ENCODE measurements at regions of chr2 and their contacts with region 1.

Region 1: DNA sequence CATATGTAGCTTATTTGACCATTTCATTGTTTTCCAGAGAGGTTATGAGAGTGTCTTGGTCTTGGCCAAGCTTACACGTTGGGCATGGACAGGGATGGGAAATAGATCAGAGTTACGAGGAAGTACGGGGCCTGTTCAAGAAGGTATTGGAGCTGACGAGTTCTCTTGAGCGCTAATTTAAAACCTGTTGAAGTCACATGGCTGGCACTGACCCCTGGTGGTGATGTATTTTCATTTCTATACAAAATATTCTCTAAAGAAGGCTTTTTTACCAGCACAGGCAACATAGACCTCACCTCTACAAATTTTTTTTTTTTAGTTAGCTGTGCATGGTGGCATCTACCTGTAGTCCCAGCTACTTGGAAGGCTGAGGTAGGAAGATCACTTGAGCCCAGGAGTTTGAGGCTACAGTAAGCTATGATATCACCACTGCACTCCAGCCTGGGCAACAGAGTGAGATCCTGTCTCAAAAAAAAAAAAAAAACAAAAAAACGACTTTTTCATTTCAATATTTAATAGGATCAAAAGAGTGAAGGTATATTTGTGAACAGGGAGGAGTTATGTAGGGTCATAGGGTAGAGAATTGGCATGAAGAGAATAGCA is 19.6 kb downstream of the UGP2 start:
- DNase-seq: peak; percentile 71
- H3K4me3 Mint-ChIP-seq: no peak overlapping the region
- H3K27ac Mint-ChIP-seq: no peak overlapping the region
- H3K4me1 Mint-ChIP-seq: peaks cover 52% of the 10 kb centered on the region
- H3K27me3 Mint-ChIP-seq: no peaks in the 10 kb centered on the region

Region 2: DNA sequence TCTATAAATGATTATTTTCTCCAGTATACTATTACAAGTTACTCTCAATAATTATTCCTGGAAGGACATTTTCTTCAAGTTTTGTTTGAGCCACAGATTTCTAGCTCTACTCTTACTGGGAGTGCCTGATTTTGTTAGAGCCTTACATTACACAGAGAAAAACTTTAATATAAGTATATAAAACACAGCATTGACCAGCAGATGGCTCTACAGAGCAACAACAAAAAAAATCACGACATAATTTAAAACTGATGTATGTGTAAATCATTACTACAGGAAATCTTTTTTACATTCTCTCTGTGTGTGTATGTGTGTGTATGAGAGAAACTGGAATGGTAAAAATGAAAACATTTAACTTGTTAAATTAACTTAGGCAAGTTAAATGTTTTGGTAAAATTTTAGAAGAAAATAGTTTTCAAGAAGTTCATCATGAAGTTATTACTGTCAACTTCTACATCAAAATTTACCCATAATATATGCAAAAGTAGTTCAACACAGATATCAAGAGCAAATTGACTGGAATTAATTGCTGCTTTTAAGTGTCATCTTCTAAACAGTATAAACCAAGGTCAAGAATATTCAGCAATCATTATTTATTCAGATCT is 169.2 kb before region 1 on chr2:
- CTCF ChIA-PET with region 1: interaction called, 32 read pairs
- DNase-seq: peak; percentile 29
- H3K4me3 Mint-ChIP-seq: no peak overlapping the region
- H3K27ac Mint-ChIP-seq: no peak overlapping the region
- H3K4me1 Mint-ChIP-seq: no peaks in the 10 kb centered on the region
- H3K27me3 Mint-ChIP-seq: no peaks in the 10 kb centered on the region

Region 3: GRCh38 chr2:63841254-63842022 is 19.9 kb before region 1 on chr2 and contains the start of gene UGP2:
- CTCF ChIA-PET with region 1: interaction called, 32 read pairs
- DNase-seq: peak; percentile 94
- H3K4me3 Mint-ChIP-seq: peak within 1 kb of the TSS; percentile 95
- H3K27ac Mint-ChIP-seq: peak within 1 kb of the TSS; percentile 100
- H3K4me1 Mint-ChIP-seq: peaks cover 54% of the 10 kb centered on the region
- H3K27me3 Mint-ChIP-seq: peaks cover 9% of the 10 kb centered on the region